ENCODE measurements at regions of chr3 and their contacts with region 1.

Region 1: DNA sequence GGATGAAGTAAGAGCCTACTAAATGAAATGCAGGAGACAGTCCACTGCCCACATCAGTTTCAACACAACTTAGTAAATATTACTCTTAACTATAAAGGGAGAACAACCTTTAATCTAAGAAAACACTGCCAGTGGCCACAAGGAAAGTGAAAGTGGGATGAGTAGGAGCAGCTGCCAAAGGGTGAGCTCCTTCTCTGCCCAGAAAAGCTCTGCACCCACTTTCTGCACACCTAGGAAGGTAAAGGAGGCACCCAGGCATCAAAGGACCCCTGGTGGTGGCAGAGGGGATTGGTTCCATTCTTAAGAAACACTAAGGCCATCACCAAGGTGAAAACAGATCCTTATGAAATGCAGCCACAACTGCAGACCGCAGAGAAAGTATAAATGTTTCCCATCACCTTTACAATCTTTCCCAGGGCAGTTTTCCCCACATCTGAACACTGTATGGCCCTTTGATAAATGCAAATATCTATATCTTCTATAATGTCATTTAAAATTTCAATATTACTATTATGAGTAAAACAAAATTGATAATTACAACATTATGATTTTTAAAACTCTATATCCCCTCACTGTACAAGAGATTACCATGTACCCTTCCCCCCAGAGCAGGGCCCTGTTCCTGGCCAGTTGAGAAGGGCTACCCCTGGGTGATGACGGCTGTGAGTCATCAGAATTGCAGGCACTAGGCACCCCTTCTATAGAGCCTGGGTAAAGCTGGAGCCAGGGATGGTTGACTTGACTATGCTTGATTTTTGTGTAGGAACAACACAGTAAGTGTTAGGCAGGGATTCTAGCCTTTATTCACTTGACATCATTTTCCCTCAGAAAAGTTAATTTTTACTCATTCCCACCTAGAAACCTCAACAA is 92.0 kb downstream of the SNRK start:
- DNase-seq: peak; percentile 48 to 86 (median 70)
- ATAC-seq: peak; percentile 92 to 98 (median 96)
- H3K4me3 ChIP-seq: no peak overlapping the region
- H3K4me3 Mint-ChIP-seq: no peak overlapping the region
- H3K27ac ChIP-seq: no peak overlapping the region
- H3K27ac Mint-ChIP-seq: peak overlapping the region; percentile 57 to 63
- H3K4me1 ChIP-seq: peaks cover 3 to 15% of the 10 kb centered on the region in 2 experiments
- H3K4me1 Mint-ChIP-seq: peaks cover 17 to 20% (median 17%) of the 10 kb centered on the region in 3 donors
- H3K27me3 ChIP-seq: no peaks in the 10 kb centered on the region
- H3K27me3 Mint-ChIP-seq: no peaks in the 10 kb centered on the region

Region 2: DNA sequence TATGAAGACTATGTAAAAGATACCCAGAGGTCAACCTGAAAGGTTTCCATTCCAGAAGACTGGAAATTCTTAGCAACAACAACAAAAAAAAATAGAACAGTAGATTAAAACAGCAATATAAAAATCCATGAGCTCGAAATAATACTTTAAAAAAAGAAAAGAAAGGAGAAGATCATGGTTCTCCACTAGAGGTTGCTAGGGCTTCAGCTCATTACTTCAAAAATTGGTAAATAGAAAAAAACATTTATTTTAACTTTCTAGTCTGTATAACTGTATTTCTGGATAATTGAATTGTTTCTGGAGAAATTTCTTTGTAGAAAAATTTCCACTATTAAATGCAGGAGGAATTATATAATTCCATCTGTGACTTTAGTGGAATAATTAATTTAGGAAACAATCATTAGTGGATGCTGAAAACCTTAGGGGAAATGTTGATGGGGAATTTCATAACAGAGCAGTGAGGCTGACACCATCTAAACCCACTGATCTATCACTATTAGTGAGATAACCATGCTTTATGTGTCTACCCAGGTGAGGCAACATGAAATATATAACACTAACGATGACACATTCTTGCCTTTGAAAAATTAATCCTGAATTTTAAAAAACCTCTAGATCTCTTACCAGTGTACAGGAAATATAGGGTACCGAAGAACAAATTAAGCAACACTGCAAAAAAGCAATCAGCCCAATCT is 154.5 kb before region 1 on chr3:
- CTCF ChIA-PET with region 1: interaction called in 1 of 2 experiments, 28 read pairs
- POLR2A ChIA-PET with region 1: no interaction called
- DNase-seq: peak in 1 of 35 experiments; percentile 52
- ATAC-seq: no peak
- H3K4me3 ChIP-seq: no peak overlapping the region
- H3K4me3 Mint-ChIP-seq: peak overlapping the region in 1 of 3 donors; percentile 57
- H3K27ac ChIP-seq: no peak overlapping the region
- H3K27ac Mint-ChIP-seq: peak overlapping the region; percentile 42 to 81
- H3K4me1 ChIP-seq: peaks cover 23 to 43% of the 10 kb centered on the region in 2 experiments
- H3K4me1 Mint-ChIP-seq: peaks cover 59 to 65% (median 60%) of the 10 kb centered on the region in 3 donors
- H3K27me3 ChIP-seq: no peaks in the 10 kb centered on the region
- H3K27me3 Mint-ChIP-seq: no peaks in the 10 kb centered on the region

Region 3: GRCh38 chr3:43389388-43390254 is 11.3 kb after region 1 on chr3:
- CTCF ChIA-PET with region 1: interaction called, 3 to 10 read pairs
- POLR2A ChIA-PET with region 1: no interaction called
- DNase-seq: peak; percentile 52 to 89 (median 73)
- ATAC-seq: peak; percentile 94 to 98 (median 96)
- H3K4me3 ChIP-seq: peak overlapping the region; percentile 8 to 15
- H3K4me3 Mint-ChIP-seq: peak overlapping the region; percentile 26 to 60 (median 53)
- H3K27ac ChIP-seq: peak overlapping the region; percentile 91
- H3K27ac Mint-ChIP-seq: peak overlapping the region; percentile 96 to 97
- H3K4me1 ChIP-seq: peaks cover 35 to 36% of the 10 kb centered on the region in 2 experiments
- H3K4me1 Mint-ChIP-seq: peaks cover 85 to 93% (median 85%) of the 10 kb centered on the region in 3 donors
- H3K27me3 ChIP-seq: no peaks in the 10 kb centered on the region
- H3K27me3 Mint-ChIP-seq: no peaks in the 10 kb centered on the region